ENCODE measurements at regions of chr2 and their contacts with region 1.

Region 1: DNA sequence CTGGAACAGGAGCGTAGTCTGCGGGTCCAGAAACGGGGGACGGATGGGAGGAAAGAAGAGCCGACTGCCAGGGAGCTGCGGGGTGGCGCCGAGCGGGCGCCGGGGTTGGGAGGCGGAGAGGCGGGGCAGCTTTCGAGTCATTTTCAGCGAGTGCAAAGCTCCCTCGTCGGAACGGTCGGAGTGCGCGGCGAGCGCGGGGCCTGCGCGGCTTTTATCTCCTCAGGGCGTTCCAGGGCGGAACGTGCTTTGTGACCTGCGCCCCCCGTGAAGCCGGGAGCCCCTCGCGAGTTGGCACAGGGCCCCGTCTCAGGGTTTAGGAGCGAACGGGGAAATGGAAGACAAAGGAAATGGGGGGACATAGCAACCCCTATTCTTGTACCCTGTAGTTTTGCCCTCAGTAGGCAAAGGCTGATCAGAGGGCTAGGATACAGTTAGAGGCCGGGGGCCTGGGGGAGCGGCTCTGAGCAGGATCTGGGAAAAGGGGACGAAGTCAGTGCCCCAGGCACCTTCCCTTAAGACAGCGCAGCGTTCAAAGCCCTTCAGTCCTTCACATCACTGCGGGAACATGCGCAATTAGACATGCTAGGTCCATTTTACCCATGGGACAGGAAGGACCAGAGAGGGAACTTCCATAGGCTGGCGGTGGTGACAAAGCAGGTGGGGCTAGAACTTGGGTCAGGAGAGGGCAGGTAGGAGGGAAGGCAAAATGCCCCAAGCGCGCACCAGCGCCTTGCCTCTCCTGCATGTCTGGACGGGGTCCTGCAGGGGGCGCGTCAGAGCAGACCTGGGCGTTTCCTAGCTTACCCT is 60.1 kb upstream of the IL1RL1 start:
- DNase-seq: no peak
- ATAC-seq: peak; percentile 80
- H3K4me3 ChIP-seq: no peak overlapping the region
- H3K27ac ChIP-seq: no peak overlapping the region
- H3K4me1 ChIP-seq: no peaks in the 10 kb centered on the region
- H3K27me3 ChIP-seq: no peaks in the 10 kb centered on the region; a peak in 1 of 4 replicates
- CTCF ChIP-seq: peak; percentile 58 to 63 (median 60)
- EP300 ChIP-seq: no peak
- POLR2A ChIP-seq: no peak
- RAD21 ChIP-seq: 0 out of 2 replicates have a peak, but pooled peaks have one; percentile 25

Region 2: DNA sequence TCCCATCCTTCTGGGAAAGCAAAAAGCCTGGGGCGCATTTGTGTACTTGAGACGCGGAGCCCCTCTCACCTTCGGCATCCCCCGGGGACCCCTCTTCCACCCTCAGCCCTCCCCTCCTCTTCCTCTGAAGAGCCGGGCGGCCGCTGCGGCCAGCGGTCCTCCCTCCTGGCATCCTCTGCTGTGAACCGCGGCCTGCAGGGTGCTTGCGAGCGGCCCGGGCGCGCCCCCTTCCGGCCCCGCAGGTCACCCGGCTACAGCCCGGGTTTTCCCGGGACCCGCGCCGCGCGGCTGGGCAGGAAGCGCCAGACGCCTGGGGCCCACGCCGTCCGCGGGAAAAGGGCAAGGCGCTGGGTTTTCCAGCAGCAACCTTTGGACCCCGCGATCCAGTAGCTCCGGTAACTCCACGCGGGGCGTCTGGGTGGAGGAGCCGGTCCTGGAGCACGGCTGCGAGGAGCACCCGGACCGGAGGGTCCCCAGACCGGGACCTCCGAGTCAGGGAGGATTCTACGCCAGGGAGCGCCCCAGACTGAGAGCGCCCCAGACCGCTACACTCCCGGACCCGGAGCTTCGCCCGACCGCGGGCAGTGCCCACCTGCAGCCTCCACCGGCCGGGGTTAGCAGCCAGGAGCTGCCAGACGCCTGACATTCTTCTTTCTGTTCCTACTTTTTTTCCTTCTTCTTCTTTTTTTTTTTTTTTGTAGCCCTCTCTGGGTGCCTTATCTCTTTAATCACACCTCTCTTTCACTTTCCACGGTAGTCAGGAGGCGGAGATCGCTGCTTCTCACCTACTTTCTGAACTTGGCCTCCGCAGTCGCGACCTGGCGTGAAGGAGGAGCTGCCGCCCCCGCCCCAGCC is 104.5 kb after region 1 on chr2 and contains the start of gene IL18R1:
- CTCF ChIA-PET with region 1: interaction called, 17 read pairs
- POLR2A ChIA-PET with region 1: no interaction called
- RAD21 ChIA-PET with region 1: interaction called, 4 read pairs
- SMC1A ChIA-PET with region 1: interaction called, 3 read pairs
- in situ Hi-C with region 1: loop called (anchors 5 kb)
- intact Hi-C with region 1: loop called (anchors 1 kb)
- DNase-seq: peak; percentile 42
- ATAC-seq: peak; percentile 88
- H3K4me3 ChIP-seq: peak within 1 kb of the TSS; percentile 96
- H3K27ac ChIP-seq: peak within 1 kb of the TSS; percentile 91
- H3K4me1 ChIP-seq: peaks cover 4% of the 10 kb centered on the region
- H3K27me3 ChIP-seq: no peaks in the 10 kb centered on the region
- CTCF ChIP-seq: peak; percentile 72 to 91 (median 82)
- EP300 ChIP-seq: no peak
- POLR2A ChIP-seq: no peak
- RAD21 ChIP-seq: peak; percentile 76
- polyA plus RNA-seq, gene IL18R1: 3.5 to 3.8 TPM

Region 3: DNA sequence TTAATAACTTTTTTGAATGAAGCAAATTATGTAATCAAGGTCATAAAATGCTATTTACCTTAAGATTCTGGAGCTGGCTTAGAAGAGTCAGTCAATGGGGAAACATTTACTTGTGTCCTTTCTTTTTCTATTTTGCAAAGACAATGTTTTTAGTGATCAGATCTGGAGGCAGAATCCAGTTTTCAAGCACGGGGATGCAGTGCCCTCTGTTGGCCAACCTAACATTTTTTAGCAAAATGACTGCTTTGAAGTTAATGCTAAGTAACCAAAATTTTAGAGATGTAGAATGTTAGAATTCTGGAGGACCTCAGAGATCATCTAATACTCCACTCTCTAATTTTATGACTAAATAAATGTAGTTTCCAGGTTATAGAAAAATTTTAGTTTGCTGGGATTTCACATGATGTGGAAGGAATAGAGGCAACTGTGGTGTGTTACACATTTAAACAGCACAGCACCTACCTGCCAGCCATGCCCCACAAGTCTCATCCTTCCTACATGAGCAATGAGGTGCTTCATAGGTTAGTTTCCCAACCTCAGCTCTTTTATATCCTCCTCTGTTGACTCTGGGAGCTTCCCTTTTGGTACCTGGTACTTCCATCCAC is 198.2 kb after region 1 on chr2:
- CTCF ChIA-PET with region 1: interaction called, 83 read pairs
- POLR2A ChIA-PET with region 1: no interaction called
- RAD21 ChIA-PET with region 1: interaction called, 3 read pairs
- SMC1A ChIA-PET with region 1: interaction called, 4 read pairs
- in situ Hi-C with region 1: loop called (anchors 5 kb)
- intact Hi-C with region 1: loop called (anchors 1 kb)
- DNase-seq: no peak
- ATAC-seq: peak; percentile 78
- H3K4me3 ChIP-seq: no peak overlapping the region
- H3K27ac ChIP-seq: no peak overlapping the region
- H3K4me1 ChIP-seq: no peaks in the 10 kb centered on the region
- H3K27me3 ChIP-seq: no peaks in the 10 kb centered on the region
- CTCF ChIP-seq: peak; percentile 49 to 79 (median 58); a peak in 5 of 6 replicates
- EP300 ChIP-seq: no peak
- POLR2A ChIP-seq: no peak
- RAD21 ChIP-seq: peak; percentile 87

Region 4: GRCh38 chr2:102578376-102578775 is 327.1 kb after region 1 on chr2:
- CTCF ChIA-PET with region 1: no interaction called
- POLR2A ChIA-PET with region 1: no interaction called
- RAD21 ChIA-PET with region 1: no interaction called
- SMC1A ChIA-PET with region 1: no interaction called
- in situ Hi-C with region 1: no loop called
- intact Hi-C with region 1: no loop called
- DNase-seq: no peak
- ATAC-seq: no peak
- H3K4me3 ChIP-seq: no peak overlapping the region
- H3K27ac ChIP-seq: no peak overlapping the region
- H3K4me1 ChIP-seq: no peaks in the 10 kb centered on the region
- H3K27me3 ChIP-seq: no peaks in the 10 kb centered on the region; a peak in 1 of 4 replicates
- CTCF ChIP-seq: no peak
- EP300 ChIP-seq: no peak
- POLR2A ChIP-seq: no peak
- RAD21 ChIP-seq: no peak

Region 5: GRCh38 chr2:102606363-102606762 is 355.1 kb after region 1 on chr2:
- CTCF ChIA-PET with region 1: no interaction called
- POLR2A ChIA-PET with region 1: no interaction called
- RAD21 ChIA-PET with region 1: no interaction called
- SMC1A ChIA-PET with region 1: no interaction called
- in situ Hi-C with region 1: no loop called
- intact Hi-C with region 1: no loop called
- DNase-seq: no peak
- ATAC-seq: no peak
- H3K4me3 ChIP-seq: no peak overlapping the region
- H3K27ac ChIP-seq: no peak overlapping the region
- H3K4me1 ChIP-seq: no peaks in the 10 kb centered on the region
- H3K27me3 ChIP-seq: no peaks in the 10 kb centered on the region; a peak in 1 of 4 replicates
- CTCF ChIP-seq: no peak
- EP300 ChIP-seq: no peak
- POLR2A ChIP-seq: no peak
- RAD21 ChIP-seq: no peak